CD4-positive, alpha-beta T cell (primary cell): ENCODE measurements at regions of chr15 and their contacts with region 1.

Region 1: DNA sequence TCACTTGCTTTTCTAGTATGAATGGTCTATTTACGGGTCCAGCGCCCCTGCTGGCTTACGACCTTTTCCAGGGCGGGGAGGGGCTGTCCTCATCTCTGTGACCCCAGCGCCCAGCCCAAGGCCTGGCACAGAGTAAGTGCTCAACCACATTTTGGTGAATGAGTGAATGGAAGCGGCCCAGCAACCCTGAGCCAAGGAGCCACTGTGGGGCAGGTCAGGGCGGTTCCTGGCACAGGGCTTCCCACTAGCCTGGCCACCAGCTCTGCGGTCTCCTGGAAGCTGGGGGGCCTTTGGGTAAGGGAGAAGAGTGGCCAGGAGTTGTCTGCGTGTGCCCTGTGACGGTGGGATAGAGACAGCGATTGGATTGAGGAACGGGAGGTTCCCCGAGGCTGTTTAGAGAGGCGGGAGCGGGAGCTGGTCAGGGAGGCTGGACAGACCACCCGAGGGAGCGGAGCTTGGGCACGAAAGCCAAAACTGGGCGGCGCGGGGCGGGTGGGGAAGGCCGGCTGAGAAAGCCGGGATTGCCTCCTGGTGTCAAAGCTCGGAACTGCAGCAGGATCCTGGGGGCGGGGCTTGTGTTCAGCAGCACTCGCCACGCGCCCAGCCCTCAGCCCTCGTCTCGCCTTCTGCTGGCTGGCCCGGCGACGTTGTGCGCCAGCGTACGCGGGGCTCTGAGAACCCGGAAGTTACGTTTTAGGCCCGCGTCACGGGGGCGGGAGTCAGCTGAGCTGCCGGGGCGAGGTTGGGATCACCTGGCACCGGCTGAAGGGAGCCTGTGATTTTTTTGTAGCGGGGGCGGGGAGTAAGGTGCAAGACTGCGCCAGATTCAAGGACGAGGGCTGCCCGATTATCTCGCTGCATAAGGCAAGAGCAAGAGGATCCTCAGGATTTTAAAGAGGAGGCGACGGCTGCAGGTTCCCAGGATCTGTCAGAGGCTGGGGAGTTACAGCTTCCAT is at the start of gene VPS18:
- DNase-seq: peak; percentile 97 to 100 (median 99)
- ATAC-seq: peak; percentile 96
- H3K4me3 ChIP-seq: peak within 1 kb of the TSS; percentile 79
- H3K4me3 Mint-ChIP-seq: peak within 1 kb of the TSS; percentile 100
- H3K27ac ChIP-seq: peak within 1 kb of the TSS; percentile 57 to 81
- H3K27ac Mint-ChIP-seq: peak within 1 kb of the TSS; percentile 93
- H3K4me1 ChIP-seq: peaks cover 39% of the 10 kb centered on the region
- H3K4me1 Mint-ChIP-seq: peaks cover 39% of the 10 kb centered on the region
- H3K27me3 ChIP-seq: no peaks in the 10 kb centered on the region
- H3K27me3 Mint-ChIP-seq: no peaks in the 10 kb centered on the region
- CTCF ChIP-seq: peak; percentile 95
- total RNA-seq, gene VPS18: 20.8 to 21.7 TPM

Region 2: GRCh38 chr15:40523611-40524010 is 370.4 kb before region 1 on chr15:
- CTCF ChIA-PET with region 1: no interaction called
- POLR2A ChIA-PET with region 1: no interaction called
- intact Hi-C with region 1: loop called in 1 of 2 experiments (anchors 5 kb)
- DNase-seq: no peak
- ATAC-seq: no peak
- H3K4me3 ChIP-seq: no peak overlapping the region
- H3K4me3 Mint-ChIP-seq: no peak overlapping the region
- H3K27ac ChIP-seq: no peak overlapping the region
- H3K27ac Mint-ChIP-seq: no peak overlapping the region
- H3K4me1 ChIP-seq: peaks cover 4% of the 10 kb centered on the region
- H3K4me1 Mint-ChIP-seq: peaks cover 5% of the 10 kb centered on the region
- H3K27me3 ChIP-seq: no peaks in the 10 kb centered on the region
- H3K27me3 Mint-ChIP-seq: no peaks in the 10 kb centered on the region
- CTCF ChIP-seq: no peak

Region 3: GRCh38 chr15:40694688-40695468 is 199.1 kb before region 1 on chr15 and contains the start of gene RAD51:
- CTCF ChIA-PET with region 1: interaction called, 10 read pairs
- POLR2A ChIA-PET with region 1: interaction called, 15 read pairs
- intact Hi-C with region 1: loop called in 1 of 2 experiments (anchors 5 kb)
- DNase-seq: peak; percentile 87 to 96 (median 93)
- ATAC-seq: peak; percentile 91
- H3K4me3 ChIP-seq: peak within 1 kb of the TSS; percentile 82
- H3K4me3 Mint-ChIP-seq: peak within 1 kb of the TSS; percentile 97
- H3K27ac ChIP-seq: peak within 1 kb of the TSS; percentile 94 to 99
- H3K27ac Mint-ChIP-seq: peak within 1 kb of the TSS; percentile 98
- H3K4me1 ChIP-seq: peaks cover 23% of the 10 kb centered on the region
- H3K4me1 Mint-ChIP-seq: peaks cover 21% of the 10 kb centered on the region
- H3K27me3 ChIP-seq: no peaks in the 10 kb centered on the region
- H3K27me3 Mint-ChIP-seq: no peaks in the 10 kb centered on the region
- CTCF ChIP-seq: no peak
- total RNA-seq, gene RAD51: 0.64 to 1.5 TPM

Region 4: DNA sequence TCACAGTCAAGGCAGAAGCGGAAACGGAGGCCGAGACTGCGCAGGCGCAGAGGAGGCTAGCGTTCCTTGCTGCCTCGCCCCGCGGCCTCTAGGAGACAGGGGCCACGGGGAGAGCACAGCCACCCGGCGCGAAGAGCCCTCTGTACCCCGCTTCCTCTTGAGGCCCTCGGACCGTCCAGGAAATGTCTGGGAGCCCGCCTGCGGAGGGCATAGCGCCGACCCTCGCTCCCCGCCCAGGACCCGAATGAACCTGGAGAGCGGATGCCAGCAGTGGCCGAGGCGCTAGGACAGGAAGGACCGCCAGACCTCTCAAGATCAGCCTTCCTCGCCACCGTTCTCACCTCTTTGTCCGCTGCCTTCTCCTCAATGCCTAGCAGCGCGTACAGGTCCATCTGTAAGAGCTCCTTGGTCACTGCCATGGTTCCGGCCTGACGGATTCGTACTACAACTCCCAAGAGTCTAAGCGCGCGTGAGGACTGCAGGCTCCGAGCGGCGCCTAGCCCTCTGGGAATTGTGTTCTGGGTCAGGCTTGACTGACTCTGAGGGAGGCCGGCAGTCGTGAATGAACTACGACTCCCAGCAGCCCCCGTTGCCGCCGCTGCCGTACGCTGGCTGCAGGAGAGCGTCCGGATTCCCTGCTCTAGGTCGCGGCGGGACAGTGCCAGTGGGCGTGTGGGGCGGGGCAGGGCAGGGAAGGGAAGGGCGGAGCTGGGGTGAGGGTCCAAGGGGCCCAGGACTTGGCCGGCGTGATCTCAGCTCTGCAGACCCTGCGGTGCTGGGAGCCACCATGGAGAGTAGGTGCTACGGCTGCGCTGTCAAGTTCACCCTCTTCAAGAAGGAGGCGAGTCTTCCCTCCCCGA is 86.8 kb before region 1 on chr15 and contains the starts of genes DNAJC17 and ZFYVE19:
- CTCF ChIA-PET with region 1: interaction called, 8 read pairs
- POLR2A ChIA-PET with region 1: interaction called, 8 read pairs
- intact Hi-C with region 1: loop called in 1 of 2 experiments (anchors 2 kb)
- DNase-seq: peak; percentile 86 to 97 (median 92)
- ATAC-seq: peak; percentile 97
- H3K4me3 ChIP-seq: peak within 1 kb of the TSS; percentile 80
- H3K4me3 Mint-ChIP-seq: peak within 1 kb of the TSS; percentile 96
- H3K27ac ChIP-seq: peak within 1 kb of the TSS; percentile 90 to 93
- H3K27ac Mint-ChIP-seq: peak within 1 kb of the TSS; percentile 91
- H3K4me1 ChIP-seq: peaks cover 30% of the 10 kb centered on the region
- H3K4me1 Mint-ChIP-seq: peaks cover 23% of the 10 kb centered on the region
- H3K27me3 ChIP-seq: no peaks in the 10 kb centered on the region
- H3K27me3 Mint-ChIP-seq: no peaks in the 10 kb centered on the region
- CTCF ChIP-seq: no peak
- total RNA-seq, gene DNAJC17: 14.4 to 17.9 TPM
- total RNA-seq, gene ZFYVE19: 12.0 to 13.0 TPM

Region 5: DNA sequence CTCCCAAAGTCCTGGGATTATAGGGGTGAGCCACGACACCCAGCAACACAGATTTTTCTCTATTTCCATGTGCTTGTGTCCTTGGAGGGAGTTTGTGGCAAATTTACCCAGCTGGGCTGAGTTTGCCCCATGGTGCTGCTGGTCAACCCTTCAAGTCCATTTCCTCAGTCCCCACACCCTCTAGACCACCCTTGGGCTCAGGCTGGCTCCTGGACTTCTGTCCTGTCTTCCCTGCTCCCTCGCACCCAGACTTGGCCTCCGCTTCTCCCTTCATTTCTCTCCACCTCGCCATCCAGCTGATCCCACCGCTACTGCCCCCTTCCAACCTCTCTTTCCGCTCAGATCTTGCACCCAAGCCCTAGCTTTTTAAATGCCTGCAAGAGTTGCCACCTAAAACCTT is 12.7 kb before region 1 on chr15:
- CTCF ChIA-PET with region 1: interaction called, 10 read pairs
- POLR2A ChIA-PET with region 1: interaction called, 4 read pairs
- intact Hi-C with region 1: no loop called
- DNase-seq: no peak
- ATAC-seq: no peak
- H3K4me3 ChIP-seq: no peak overlapping the region
- H3K4me3 Mint-ChIP-seq: no peak overlapping the region
- H3K27ac ChIP-seq: no peak overlapping the region
- H3K27ac Mint-ChIP-seq: no peak overlapping the region
- H3K4me1 ChIP-seq: peaks cover 8% of the 10 kb centered on the region
- H3K4me1 Mint-ChIP-seq: peaks cover 10% of the 10 kb centered on the region
- H3K27me3 ChIP-seq: no peaks in the 10 kb centered on the region
- H3K27me3 Mint-ChIP-seq: peaks cover 4% of the 10 kb centered on the region
- CTCF ChIP-seq: no peak

Region 6: GRCh38 chr15:41283653-41284426 is 389.8 kb after region 1 on chr15:
- CTCF ChIA-PET with region 1: no interaction called
- POLR2A ChIA-PET with region 1: no interaction called
- intact Hi-C with region 1: loop called in 1 of 2 experiments (anchors 5 kb)
- DNase-seq: peak; percentile 94 to 99 (median 97)
- ATAC-seq: peak; percentile 96
- H3K4me3 ChIP-seq: peak overlapping the region; percentile 80
- H3K4me3 Mint-ChIP-seq: peak overlapping the region; percentile 91
- H3K27ac ChIP-seq: peak overlapping the region; percentile 83 to 86
- H3K27ac Mint-ChIP-seq: peak overlapping the region; percentile 91
- H3K4me1 ChIP-seq: peaks cover 29% of the 10 kb centered on the region
- H3K4me1 Mint-ChIP-seq: peaks cover 50% of the 10 kb centered on the region
- H3K27me3 ChIP-seq: no peaks in the 10 kb centered on the region
- H3K27me3 Mint-ChIP-seq: no peaks in the 10 kb centered on the region
- CTCF ChIP-seq: no peak